Calu3 (cell line): ENCODE measurements at regions of chr2 and their contacts with region 1.

Region 1: DNA sequence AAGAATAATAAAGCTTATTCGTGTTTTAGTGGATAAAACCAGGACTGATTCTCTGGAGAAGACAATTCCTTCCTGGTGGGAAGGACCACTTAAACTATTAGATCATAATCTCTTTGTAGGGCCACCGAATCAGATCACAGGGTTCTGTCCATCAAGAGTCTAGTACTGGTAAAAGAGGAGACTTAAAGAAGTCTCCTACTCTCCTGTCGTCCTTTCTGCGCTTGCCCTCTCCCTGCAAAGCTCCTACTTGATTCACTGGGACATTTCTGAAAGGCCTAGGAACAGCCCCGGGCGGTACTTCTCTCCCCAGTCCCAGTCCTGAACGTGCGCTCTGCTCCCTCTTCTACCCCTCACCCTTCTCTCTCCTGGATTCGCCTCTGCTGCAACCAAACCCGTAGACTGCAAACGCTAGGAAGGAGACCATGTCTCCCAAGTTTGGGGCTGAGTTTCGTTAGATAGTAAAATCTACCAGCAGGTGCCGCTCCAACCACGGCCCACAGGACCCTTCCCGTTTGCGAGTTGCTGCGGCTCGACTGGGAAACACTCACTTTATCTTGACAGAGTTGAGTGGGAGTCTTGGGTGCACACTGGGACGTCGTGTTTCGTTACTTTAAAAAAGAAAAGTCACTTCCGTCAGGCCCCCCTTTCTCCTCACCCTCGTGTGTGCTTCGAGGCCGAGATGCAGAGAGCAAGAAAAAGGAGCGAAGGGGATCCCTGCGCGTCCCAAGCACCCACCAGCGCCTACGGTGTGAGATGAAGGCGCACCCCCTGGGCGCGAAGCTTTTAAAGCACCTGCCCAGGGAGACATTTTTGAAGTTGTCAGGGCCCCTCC is 923 bp downstream of the FIGLA start:
- DNase-seq: peak; percentile 61
- H3K4me3 Mint-ChIP-seq: no peak overlapping the region
- H3K27ac Mint-ChIP-seq: no peak overlapping the region
- H3K4me1 Mint-ChIP-seq: no peaks in the 10 kb centered on the region
- H3K27me3 Mint-ChIP-seq: peaks cover 69% of the 10 kb centered on the region
- CTCF ChIP-seq: peak; percentile 42

Region 2: DNA sequence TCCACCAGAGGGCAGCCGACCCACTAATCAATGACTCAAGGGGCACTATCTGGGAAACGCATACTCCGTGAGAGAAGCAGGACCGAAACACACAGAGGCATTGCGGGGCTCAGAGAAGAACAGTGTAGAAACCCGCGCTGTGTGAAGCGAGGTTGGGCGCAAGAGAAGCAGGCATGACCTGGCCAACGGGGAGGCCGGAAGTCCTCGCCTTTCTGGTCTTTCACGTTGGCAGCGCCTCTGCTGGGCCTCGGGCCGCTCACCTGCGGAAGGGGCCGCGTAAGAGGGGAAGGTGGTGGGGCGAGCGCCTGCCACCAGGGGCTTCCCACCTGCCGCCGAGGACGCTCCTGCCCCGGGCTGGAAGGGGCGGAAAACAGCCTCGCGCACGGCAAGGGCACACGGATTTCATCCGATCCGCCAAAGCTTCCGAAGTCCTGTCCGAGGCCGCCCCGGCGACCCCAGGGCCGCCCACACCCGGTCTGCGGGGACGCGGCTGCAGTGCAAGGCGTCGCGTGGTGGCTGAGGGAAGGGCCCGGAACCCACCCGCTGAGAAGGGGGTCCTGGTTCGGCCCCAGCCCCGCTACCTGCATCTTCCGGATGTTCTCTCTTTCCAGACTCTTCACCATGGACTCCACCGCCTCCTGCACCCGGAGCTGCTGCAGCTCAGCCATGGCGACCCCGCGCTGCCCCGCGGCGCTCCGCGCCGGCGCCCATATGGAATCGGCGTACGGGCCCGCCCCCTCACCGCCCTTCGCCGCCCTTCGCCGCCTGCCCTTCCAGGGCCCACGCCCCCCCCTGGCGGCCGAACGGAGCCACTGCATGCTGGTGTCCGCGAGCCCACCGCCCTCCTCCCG is 488.0 kb before region 1 on chr2 and contains the start of gene FAM136A:
- CTCF ChIA-PET with region 1: interaction called, 7 read pairs
- intact Hi-C with region 1: loop called (anchors 10 kb)
- DNase-seq: peak; percentile 94
- H3K4me3 Mint-ChIP-seq: peak within 1 kb of the TSS; percentile 90
- H3K27ac Mint-ChIP-seq: peak within 1 kb of the TSS; percentile 94
- H3K4me1 Mint-ChIP-seq: peaks cover 10% of the 10 kb centered on the region
- H3K27me3 Mint-ChIP-seq: no peaks in the 10 kb centered on the region
- CTCF ChIP-seq: peak; percentile 76
- total RNA-seq, gene FAM136A: 53.7 and 60.4 TPM in 2 replicates

Region 3: DNA sequence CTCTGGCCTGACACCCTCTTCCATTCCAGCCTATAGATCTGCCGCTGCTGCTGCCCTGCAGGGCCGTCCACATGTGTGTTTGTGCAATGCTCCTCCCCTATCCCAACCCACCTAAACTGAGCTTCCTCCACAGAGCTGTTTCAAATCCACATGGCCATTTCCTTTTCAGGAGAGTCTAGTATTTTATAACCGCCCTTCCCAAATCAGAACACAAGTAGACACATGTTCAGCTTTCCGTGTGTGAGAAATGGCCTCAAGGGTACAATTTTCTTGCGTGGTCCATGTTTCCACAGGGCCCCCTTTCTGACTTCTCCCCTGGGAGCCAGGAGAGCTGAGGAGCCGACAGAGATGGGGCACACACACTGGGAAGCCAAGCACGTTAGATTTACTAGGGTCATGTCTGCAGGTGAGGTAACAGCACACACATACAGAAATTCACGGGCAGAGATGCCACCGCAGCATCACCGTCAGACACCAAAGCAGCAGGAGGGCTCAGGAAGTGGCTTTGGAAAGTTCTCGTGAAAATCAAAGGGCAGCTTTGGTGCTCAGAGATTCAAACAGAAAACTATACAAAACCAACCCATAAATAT is 133.0 kb before region 1 on chr2:
- CTCF ChIA-PET with region 1: interaction called, 3 read pairs
- intact Hi-C with region 1: loop called (anchors 2 kb)
- DNase-seq: no peak
- H3K4me3 Mint-ChIP-seq: no peak overlapping the region
- H3K27ac Mint-ChIP-seq: no peak overlapping the region
- H3K4me1 Mint-ChIP-seq: no peaks in the 10 kb centered on the region
- H3K27me3 Mint-ChIP-seq: peaks cover 98% of the 10 kb centered on the region
- CTCF ChIP-seq: no peak

Region 4: DNA sequence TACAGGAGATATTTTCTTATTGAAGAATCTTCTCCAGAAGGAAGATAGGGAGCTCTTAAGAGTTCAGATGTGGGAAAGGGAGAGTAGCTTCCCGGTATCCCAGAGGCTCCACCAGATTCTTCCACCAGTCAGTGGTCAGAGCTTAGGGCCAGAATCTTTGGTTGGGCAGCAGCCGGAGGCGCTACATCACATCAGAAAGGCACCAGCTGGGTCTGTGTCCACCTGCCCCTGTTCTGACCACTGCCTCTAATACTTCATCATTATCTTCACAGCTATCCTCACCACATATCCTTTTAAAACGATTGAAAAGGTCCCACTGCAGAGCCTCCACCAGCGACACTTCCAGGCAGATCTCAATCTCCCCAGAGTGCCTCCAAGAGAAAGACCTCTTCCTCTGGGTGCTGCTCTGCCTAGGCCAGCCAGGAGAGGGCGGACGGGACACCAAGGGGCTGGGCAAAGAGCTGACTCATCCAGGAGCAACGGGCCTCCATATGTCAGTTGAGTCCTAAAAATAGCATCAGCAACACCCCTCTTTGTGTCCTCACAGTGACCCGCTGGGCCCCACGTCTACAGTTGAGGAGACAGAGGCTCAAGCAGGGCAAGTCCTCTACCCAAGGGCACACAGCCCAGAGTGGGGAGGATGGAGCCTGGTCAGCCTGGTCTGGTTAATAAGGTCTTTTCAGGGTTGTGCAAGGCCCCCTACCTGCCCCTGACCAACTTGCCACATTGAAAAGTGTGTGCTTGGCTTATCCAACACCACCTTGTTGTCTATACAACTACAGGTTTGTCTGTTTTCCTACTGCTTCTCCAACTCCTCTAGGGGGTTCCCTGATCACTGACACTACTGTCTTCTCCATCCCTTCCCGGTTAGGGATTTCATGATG is 102.7 kb before region 1 on chr2:
- CTCF ChIA-PET with region 1: no interaction called
- intact Hi-C with region 1: loop called (anchors 2 kb)
- DNase-seq: peak; percentile 68
- H3K4me3 Mint-ChIP-seq: no peak overlapping the region
- H3K27ac Mint-ChIP-seq: no peak overlapping the region
- H3K4me1 Mint-ChIP-seq: peaks cover 9% of the 10 kb centered on the region
- H3K27me3 Mint-ChIP-seq: peaks cover 83% of the 10 kb centered on the region
- CTCF ChIP-seq: peak; percentile 27

Region 5: DNA sequence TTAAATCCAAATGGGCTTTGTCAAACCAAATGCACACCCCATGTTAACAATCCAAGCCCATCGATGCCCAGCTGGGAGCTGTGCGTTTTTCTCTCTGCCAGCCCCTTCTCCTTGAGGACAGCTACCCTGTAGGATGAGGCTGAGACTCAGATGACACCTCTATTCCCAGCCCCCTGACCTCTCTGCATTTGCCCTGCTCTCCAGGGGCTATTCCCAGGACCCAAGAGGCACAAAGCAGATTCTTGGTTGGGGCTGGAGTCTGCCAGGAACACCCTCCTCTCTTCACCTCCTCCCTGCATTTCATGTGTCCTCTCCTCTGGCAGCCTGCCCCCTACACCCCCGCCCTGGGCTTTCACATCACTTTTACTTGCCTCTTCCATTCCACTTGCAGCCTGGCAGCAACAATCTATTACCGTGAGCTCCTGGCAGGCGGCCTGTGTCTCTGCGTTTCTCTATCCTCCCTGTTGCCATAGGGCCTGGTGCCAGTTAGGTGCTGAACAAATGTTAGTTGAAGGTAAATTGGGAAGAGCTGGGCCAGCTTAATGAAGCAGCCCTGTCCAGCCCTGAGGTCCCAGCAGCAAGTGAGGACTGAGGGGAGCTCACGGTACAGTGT is 73.3 kb before region 1 on chr2:
- CTCF ChIA-PET with region 1: no interaction called
- intact Hi-C with region 1: no loop called
- DNase-seq: no peak
- H3K4me3 Mint-ChIP-seq: no peak overlapping the region
- H3K27ac Mint-ChIP-seq: no peak overlapping the region
- H3K4me1 Mint-ChIP-seq: no peaks in the 10 kb centered on the region
- H3K27me3 Mint-ChIP-seq: peaks cover 74% of the 10 kb centered on the region
- CTCF ChIP-seq: no peak

Region 6: GRCh38 chr2:70861777-70862625 is 72.5 kb after region 1 on chr2:
- CTCF ChIA-PET with region 1: no interaction called
- intact Hi-C with region 1: loop called (anchors 5 kb)
- DNase-seq: peak; percentile 85
- H3K4me3 Mint-ChIP-seq: no peak overlapping the region
- H3K27ac Mint-ChIP-seq: no peak overlapping the region
- H3K4me1 Mint-ChIP-seq: peaks cover 8% of the 10 kb centered on the region
- H3K27me3 Mint-ChIP-seq: peaks cover 85% of the 10 kb centered on the region
- CTCF ChIP-seq: peak; percentile 89

Region 7: DNA sequence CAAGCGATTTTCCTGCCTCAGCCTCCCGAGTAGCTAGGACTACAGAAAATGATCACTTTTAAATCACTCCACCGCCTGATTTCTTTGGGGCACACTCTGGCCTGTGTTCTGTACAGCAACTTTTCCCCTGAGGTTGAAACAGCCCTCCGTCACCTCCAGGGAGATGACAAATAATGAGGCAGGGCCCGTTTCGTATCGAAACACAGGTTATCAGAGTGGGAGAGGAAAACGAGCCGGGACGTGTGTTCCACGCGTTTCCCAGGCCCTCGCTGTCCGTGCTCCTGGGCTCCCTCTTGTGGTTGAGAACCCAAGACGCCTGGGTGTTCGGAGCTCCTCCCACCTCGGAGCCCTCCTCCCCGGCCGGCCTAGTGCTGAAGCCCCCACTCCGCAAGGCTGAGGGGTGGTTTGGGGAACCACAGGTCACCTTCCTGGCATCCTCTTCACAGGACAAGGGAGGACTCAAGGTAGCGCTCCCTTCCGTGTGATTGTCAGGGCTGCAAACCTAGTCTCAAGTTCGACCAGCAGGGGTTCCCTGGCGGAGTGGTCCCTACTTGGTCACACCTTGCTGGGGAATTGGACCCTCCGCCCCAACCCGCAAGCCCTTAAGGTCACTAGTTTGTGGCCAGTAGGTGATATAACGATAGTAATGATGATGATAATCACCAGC is 158.9 kb after region 1 on chr2:
- CTCF ChIA-PET with region 1: no interaction called
- intact Hi-C with region 1: loop called (anchors 2 kb)
- DNase-seq: peak; percentile 86
- H3K4me3 Mint-ChIP-seq: peak overlapping the region; percentile 54
- H3K27ac Mint-ChIP-seq: no peak overlapping the region
- H3K4me1 Mint-ChIP-seq: peaks cover 17% of the 10 kb centered on the region
- H3K27me3 Mint-ChIP-seq: peaks cover 40% of the 10 kb centered on the region
- CTCF ChIP-seq: peak; percentile 84